Gastrocnemius medialis (tissue), 4 donors: ENCODE measurements at regions of chr2 and their contacts with region 1.

Region 1: GRCh38 chr2:232611551-232612218 is 21.7 kb upstream of the EFHD1 start:
- DNase-seq: peak; percentile 38 to 60
- ATAC-seq: peak; percentile 23 to 75
- H3K4me3 ChIP-seq: no peak overlapping the region
- H3K27ac ChIP-seq: no peak overlapping the region
- H3K4me1 ChIP-seq: no peaks in the 10 kb centered on the region
- H3K27me3 ChIP-seq: no peaks in the 10 kb centered on the region
- CTCF ChIP-seq: peak; percentile 71 to 83 (median 82)
- POLR2A ChIP-seq: no peak

Region 2: DNA sequence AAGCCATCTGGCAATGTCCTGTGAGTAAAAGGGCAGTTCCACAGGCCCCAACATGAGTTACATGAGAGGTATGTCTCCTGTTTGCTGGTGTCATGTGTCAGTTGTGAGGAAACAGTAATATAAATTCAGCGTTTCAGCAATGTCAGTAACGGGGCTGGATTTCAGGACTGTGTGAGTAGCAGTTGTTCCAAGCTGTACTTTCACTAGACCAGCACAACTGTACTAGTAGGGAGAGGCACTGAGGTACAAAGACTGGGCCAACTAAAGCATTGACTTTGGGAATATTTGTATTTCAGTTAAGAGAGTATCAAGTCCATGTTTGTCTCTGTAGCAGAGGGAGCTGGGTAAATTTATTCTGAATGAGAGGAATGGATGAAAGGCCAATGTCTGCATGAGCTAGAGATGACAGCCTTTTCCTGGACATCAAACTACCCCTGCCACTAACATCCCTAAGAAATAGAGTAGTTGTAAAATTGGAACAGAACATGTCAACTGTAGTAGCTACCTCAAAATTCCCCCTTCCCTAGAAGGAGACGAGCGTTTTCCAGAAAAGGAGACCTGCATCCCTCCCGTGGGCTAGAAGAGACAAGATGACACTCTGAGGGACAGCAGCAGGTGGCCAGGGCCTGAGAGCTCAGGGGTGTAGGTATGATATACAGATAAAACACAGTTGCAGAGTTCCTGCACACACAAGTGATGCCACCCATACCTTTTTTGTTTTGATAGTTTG is 36.8 kb before region 1 on chr2:
- in situ Hi-C with region 1: no loop called
- intact Hi-C with region 1: no loop called
- DNase-seq: peak; percentile 68 to 91
- ATAC-seq: peak; percentile 82 to 86
- H3K4me3 ChIP-seq: peak overlapping the region in 3 of 4 donors; percentile 26 to 49 (median 30)
- H3K27ac ChIP-seq: peak overlapping the region; percentile 85 to 93 (median 88)
- H3K4me1 ChIP-seq: peaks cover 58 to 85% of the 10 kb centered on the region in 2 donors
- H3K27me3 ChIP-seq: no peaks in the 10 kb centered on the region
- CTCF ChIP-seq: no peak
- POLR2A ChIP-seq: peak in 1 of 2 donors; percentile 14

Region 3: DNA sequence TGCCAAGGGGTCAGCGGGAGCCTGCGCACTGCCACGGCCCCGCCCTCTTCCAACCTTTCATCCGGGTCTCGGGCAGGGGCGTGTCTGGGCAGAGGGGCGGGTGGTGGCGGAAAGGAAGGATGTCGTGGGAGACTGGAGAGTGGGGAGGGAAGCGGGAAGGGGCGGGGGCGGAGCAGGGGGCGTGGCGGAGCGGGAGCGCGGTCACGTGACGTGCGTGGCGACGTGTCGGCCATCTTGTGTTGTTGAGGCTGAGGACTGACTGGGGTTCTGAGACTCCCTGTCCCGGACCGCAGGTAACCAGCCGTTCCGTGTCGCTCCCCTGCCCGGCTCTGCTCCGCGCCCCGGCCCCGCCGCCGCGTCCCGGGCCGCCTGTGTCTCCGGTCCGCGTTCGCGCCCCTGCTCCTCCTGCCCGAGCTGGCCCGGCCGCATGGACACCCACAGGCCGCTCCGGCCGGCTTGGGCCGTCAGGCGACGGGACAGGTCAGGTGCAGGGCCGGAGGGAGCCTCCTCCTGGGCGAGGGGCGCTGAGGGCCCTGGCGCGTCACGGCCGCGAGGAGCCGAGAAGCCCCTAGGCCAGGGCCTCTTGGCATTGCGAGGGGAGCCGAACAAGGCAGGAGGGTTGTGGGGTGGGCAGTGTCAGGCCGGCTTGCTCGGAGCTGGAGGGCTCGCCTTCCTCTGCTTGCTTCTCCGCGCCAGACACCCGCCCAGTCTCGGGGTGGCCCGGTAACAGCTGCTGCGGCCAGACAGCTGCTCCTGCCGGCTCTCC is 85.6 kb after region 1 on chr2 and contains the start of gene GIGYF2:
- in situ Hi-C with region 1: no loop called
- intact Hi-C with region 1: loop called (anchors 1 kb)
- DNase-seq: peak; percentile 62 to 97
- ATAC-seq: peak; percentile 93 to 95
- H3K4me3 ChIP-seq: peak within 1 kb of the TSS; percentile 81 to 99 (median 94)
- H3K27ac ChIP-seq: peak within 1 kb of the TSS; percentile 98 to 100 (median 99)
- H3K4me1 ChIP-seq: peaks cover 39 to 41% of the 10 kb centered on the region in 2 donors
- H3K27me3 ChIP-seq: no peaks in the 10 kb centered on the region
- CTCF ChIP-seq: peak in 3 of 5 experiments; percentile 9 to 41 (median 10)
- POLR2A ChIP-seq: peak; percentile 63 to 77
- total RNA-seq, gene GIGYF2: 55.7 to 87.8 (median 66.1) TPM

Region 4: DNA sequence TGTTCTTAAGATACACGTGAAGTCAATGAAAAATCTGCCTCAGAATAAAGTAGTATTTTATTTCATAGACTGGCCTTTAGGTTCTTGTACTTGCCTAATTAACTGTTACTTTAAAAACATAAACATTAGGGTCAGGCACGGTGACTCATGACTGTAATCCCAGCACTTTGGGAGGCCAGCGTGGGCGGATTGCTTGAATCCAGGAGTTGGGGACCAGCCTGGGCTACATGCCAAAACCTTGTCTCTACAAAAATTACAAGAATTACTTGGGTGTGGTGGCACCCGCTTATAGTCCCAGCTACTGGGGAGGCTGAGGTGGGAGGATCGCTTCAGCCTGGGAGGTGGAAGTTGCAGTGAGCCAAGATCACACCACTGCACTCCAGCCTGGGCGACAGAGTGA is 242.4 kb after region 1 on chr2:
- in situ Hi-C with region 1: loop called in 1 of 4 experiments (anchors 25 kb)
- intact Hi-C with region 1: no loop called
- DNase-seq: no peak
- ATAC-seq: no peak
- H3K4me3 ChIP-seq: no peak overlapping the region
- H3K27ac ChIP-seq: peak overlapping the region; percentile 70 to 85 (median 80)
- H3K4me1 ChIP-seq: peaks cover 22 to 43% of the 10 kb centered on the region in 2 donors
- H3K27me3 ChIP-seq: no peaks in the 10 kb centered on the region
- CTCF ChIP-seq: no peak
- POLR2A ChIP-seq: no peak

Region 5: GRCh38 chr2:233053928-233054784 is 442.5 kb after region 1 on chr2:
- in situ Hi-C with region 1: loop called in 3 of 4 experiments (anchors 25 kb)
- intact Hi-C with region 1: no loop called
- DNase-seq: peak in 1 of 2 donors; percentile 29
- ATAC-seq: no peak
- H3K4me3 ChIP-seq: no peak overlapping the region
- H3K27ac ChIP-seq: no peak overlapping the region
- H3K4me1 ChIP-seq: peaks cover 0 to 9% of the 10 kb centered on the region in 2 donors
- H3K27me3 ChIP-seq: no peaks in the 10 kb centered on the region
- CTCF ChIP-seq: peak; percentile 61 to 93 (median 86)
- POLR2A ChIP-seq: no peak

Region 6: DNA sequence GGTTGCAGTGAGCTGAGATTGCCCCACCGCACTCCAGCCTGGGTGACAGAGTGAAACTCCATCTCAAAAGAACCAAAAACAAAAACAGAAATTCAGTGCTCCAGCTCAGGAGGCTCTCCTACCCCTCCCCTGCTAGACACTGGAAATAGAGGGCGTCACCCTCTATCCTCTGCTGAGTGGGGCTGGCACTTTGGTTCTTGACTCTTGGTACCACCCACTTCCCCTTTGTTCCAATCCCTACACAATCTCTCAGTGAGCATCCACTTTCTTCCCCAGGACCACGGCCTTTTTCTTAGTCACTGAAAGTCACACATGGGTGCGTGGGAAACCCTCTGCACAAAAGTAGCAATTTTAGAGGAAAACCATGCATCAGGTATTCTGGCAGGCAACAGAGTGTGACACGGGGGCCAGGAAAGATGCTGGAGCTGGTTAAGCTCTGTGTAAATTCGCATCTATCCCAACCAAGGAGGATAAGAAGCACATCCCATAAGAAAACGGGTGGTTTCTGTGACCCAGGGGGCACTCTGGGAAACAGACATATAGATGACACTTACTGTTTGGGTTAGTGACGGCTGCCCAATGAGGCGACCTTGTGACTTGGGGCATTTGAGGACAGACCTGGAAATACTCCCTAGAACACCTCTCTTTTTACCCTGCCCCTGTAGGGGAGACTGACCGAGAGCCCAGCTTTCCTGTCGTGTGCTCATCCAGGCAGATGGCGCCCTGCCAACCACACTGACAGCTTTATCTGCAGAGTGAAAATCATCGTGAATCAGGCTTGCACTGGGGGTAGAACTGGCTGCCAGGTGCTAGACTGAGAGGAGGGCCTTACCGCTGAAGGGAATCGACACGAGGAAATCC is 1234.9 kb after region 1 on chr2:
- in situ Hi-C with region 1: no loop called
- intact Hi-C with region 1: no loop called
- DNase-seq: no peak
- ATAC-seq: no peak
- H3K4me3 ChIP-seq: no peak overlapping the region
- H3K27ac ChIP-seq: no peak overlapping the region
- H3K4me1 ChIP-seq: no peaks in the 10 kb centered on the region
- H3K27me3 ChIP-seq: no peaks in the 10 kb centered on the region
- CTCF ChIP-seq: no peak
- POLR2A ChIP-seq: no peak